K562 (cell line): ENCODE measurements at regions of chr22 and their contacts with region 1.

Region 1: GRCh38 chr22:50691521-50691920 is 18.9 kb downstream of the SHANK3 start:
- DNase-seq: peak in 2 of 4 experiments; percentile 25 to 43
- ATAC-seq: no peak
- H3K4me3 ChIP-seq: no peak overlapping the region
- H3K27ac ChIP-seq: no peak overlapping the region
- H3K4me1 ChIP-seq: peaks cover 0 to 2% of the 10 kb centered on the region in 2 experiments; a peak in 2 of 5 replicates
- H3K27me3 ChIP-seq: peaks cover 9 to 38% of the 10 kb centered on the region in 2 experiments; a peak in 4 of 5 replicates
- CTCF ChIP-seq: peak; percentile 46 to 72 (median 60); a peak in 4 of 6 replicates
- EP300 ChIP-seq: no peak
- POLR2A ChIP-seq: no peak
- RAD21 ChIP-seq: peak; percentile 52 to 69

Region 2: DNA sequence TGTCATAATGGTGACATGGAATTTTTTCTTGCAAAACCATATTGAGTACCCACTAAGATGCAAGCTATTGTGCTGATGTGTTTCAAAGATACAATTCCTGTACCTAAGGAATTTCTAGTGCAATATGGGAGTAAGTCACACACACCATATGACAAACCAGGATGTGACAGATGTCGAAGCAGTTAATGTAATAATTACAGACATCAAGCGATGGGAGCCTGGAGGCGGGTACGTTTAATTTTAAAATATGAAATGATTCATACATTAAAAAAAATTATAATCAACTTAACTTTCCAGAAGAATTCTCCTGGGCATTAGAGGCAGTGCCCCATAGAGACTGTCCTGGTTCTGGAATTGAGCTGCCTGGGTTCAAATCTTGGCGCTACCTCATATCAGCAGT is 134.8 kb before region 1 on chr22:
- CTCF ChIA-PET with region 1: no interaction called
- POLR2A ChIA-PET with region 1: no interaction called
- in situ Hi-C with region 1: no loop called
- intact Hi-C with region 1: no loop called
- DNase-seq: no peak
- ATAC-seq: no peak
- H3K4me3 ChIP-seq: no peak overlapping the region
- H3K27ac ChIP-seq: no peak overlapping the region
- H3K4me1 ChIP-seq: no peaks in the 10 kb centered on the region; a peak in 1 of 5 replicates
- H3K27me3 ChIP-seq: 0 out of 5 replicates have a peak, but pooled peaks cover 0 to 4% of the 10 kb centered on the region in 2 experiments
- CTCF ChIP-seq: no peak
- EP300 ChIP-seq: no peak
- POLR2A ChIP-seq: no peak
- RAD21 ChIP-seq: no peak

Region 3: DNA sequence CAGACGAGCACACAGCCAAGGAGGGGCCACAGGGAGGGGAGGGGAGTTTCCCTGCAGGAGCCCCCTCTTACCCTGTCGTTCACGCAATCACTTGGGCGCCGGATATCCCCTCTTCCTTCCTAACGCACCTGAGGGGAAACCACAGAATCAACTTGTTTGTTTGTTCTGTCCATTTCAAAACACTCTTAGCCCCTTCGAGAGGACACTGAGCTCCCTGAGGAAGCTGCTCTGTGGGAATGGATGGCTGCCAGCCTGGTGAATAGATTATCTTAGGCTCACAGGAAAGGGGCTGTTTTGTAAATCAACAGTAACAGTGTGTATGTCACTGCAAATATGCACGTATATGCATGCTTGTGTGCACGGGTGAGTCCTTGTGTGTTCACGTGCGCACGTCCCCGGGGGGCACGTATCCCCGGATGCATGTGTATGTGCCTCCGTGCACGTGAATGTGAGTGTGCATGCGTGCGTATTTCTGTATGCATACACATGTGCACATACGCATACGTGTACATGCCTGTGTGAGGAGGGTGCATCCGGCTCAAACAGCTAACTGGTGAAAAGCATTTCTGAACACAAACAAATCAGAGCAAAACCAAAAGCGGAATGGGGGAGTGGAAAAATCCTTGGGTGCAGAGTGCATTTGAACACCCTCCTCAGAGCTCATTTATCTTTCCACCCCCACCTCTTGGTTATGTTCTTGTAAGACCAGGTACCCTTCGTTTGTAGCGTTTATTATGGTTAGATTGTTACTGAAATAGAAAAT is 70.7 kb before region 1 on chr22:
- CTCF ChIA-PET with region 1: interaction called, 5 read pairs
- POLR2A ChIA-PET with region 1: no interaction called
- in situ Hi-C with region 1: no loop called
- intact Hi-C with region 1: loop called (anchors 5 kb)
- DNase-seq: peak in 3 of 4 experiments; percentile 62 to 67 (median 62)
- ATAC-seq: peak; percentile 97
- H3K4me3 ChIP-seq: no peak overlapping the region
- H3K27ac ChIP-seq: no peak overlapping the region
- H3K4me1 ChIP-seq: peaks cover 12% of the 10 kb centered on the region in 2 experiments; a peak in 3 of 5 replicates
- H3K27me3 ChIP-seq: no peaks in the 10 kb centered on the region
- CTCF ChIP-seq: peak in 1 of 3 experiments; percentile 68; a peak in 2 of 6 replicates
- EP300 ChIP-seq: no peak
- POLR2A ChIP-seq: no peak
- RAD21 ChIP-seq: no peak; a peak in 1 of 4 replicates